Activated CD4-positive, alpha-beta T cell treated with anti-CD3 and anti-CD28 coated beads, Interleukin-2, amount 10 ng/mL, durations not matched to agents 24 days and 14 days (primary cell): ENCODE measurements at regions of chr22 and their contacts with region 1.

Region 1: DNA sequence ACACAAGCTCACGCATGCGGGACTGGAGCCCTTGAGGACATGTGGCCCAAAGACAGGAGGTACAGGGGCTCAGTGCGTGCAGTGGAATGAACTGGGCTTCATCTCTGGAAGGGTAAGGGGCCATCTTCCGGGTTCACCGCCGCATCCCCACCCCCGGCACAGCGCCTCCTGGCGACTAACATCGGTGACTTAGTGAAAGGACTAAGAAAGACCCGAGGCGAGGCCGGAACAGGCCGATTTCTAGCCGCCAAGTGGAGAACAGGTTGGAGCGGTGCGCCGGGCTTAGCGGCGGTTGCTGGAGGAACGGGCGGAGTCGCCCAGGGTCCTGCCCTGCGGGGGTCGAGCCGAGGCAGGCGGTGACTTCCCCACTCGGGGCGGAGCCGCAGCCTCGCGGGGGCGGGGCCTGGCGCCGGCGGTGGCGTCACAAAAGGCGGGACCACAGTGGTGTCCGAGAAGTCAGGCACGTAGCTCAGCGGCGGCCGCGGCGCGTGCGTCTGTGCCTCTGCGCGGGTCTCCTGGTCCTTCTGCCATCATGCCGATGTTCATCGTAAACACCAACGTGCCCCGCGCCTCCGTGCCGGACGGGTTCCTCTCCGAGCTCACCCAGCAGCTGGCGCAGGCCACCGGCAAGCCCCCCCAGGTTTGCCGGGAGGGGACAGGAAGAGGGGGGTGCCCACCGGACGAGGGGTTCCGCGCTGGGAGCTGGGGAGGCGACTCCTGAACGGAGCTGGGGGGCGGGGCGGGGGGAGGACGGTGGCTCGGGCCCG is at the start of gene MIF:
- DNase-seq: peak; percentile 100
- H3K4me3 Mint-ChIP-seq: peak within 1 kb of the TSS; percentile 97
- H3K27ac Mint-ChIP-seq: peak within 1 kb of the TSS; percentile 100
- H3K4me1 Mint-ChIP-seq: peaks cover 22% of the 10 kb centered on the region
- H3K27me3 Mint-ChIP-seq: no peaks in the 10 kb centered on the region
- total RNA-seq, gene MIF: 1,352 and 1,382 TPM in 2 replicates

Region 2: GRCh38 chr22:23608583-23608982 is 285.5 kb before region 1 on chr22:
- intact Hi-C with region 1: no loop called
- DNase-seq: no peak
- H3K4me3 Mint-ChIP-seq: no peak overlapping the region
- H3K27ac Mint-ChIP-seq: no peak overlapping the region
- H3K4me1 Mint-ChIP-seq: peaks cover 15% of the 10 kb centered on the region
- H3K27me3 Mint-ChIP-seq: no peaks in the 10 kb centered on the region

Region 3: DNA sequence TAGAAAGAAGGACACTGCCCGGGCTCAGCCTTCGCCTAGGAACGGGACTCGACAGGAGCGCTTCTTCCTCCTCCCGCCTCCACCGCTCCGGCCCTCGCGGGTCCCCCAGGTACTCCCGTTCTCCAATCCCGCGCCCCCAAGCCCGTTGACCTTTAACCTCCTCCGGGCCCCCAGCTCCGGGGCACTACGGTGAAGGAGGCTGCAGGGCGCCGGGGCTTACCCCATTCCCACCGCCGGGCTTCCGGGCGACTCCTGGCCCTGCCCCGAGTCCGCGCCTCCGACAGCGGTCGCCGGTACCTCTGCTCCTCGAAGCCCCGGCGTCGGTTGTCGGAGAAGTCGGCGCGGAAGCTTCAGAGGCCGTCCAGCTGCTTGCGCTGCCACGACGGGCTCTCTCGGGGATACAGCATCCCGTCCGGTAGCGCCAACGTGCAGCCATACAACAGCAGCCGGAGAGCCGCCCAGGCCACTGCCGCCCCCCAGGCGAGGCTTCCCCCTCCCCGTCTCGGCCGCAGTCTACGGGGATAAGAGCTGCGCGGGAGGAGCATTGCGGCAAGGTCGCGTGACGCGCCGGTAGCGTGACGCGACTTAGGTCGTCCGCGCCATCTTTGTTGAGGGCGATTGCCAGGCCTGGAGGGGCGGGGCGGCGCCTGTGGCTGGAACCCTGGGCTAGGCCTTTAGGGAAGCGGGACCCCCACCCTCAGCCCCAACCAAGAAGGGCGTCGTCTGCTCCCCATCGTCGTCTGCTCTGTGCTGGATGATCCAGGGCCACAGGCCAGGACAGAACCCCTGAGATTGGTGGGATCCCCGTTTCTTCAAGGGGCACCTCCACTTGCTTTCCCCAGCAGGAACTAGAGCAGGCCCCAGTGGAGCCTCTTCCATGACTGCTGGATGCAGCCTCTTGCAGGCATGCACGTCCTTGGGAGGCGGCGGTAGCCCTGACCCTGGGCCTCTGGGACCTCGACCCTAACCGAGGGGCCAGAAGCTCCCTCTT is 177.0 kb before region 1 on chr22:
- intact Hi-C with region 1: loop called (anchors 1 kb)
- DNase-seq: peak; percentile 96
- H3K4me3 Mint-ChIP-seq: peak overlapping the region; percentile 80
- H3K27ac Mint-ChIP-seq: peak overlapping the region; percentile 87
- H3K4me1 Mint-ChIP-seq: peaks cover 14% of the 10 kb centered on the region
- H3K27me3 Mint-ChIP-seq: no peaks in the 10 kb centered on the region

Region 4: GRCh38 chr22:23767673-23768548 is 126.2 kb before region 1 on chr22 and contains the start of gene CHCHD10:
- intact Hi-C with region 1: loop called (anchors 1 kb)
- DNase-seq: peak; percentile 95
- H3K4me3 Mint-ChIP-seq: peak within 1 kb of the TSS; percentile 87
- H3K27ac Mint-ChIP-seq: peak within 1 kb of the TSS; percentile 79
- H3K4me1 Mint-ChIP-seq: peaks cover 34% of the 10 kb centered on the region
- H3K27me3 Mint-ChIP-seq: peaks cover 2% of the 10 kb centered on the region
- total RNA-seq, gene CHCHD10: 122 and 126 TPM in 2 replicates

Region 5: GRCh38 chr22:23786752-23787599 is 107.2 kb before region 1 on chr22 and contains the start of gene SMARCB1:
- intact Hi-C with region 1: loop called (anchors 2 kb)
- DNase-seq: peak; percentile 96
- H3K4me3 Mint-ChIP-seq: peak within 1 kb of the TSS; percentile 88
- H3K27ac Mint-ChIP-seq: peak within 1 kb of the TSS; percentile 95
- H3K4me1 Mint-ChIP-seq: peaks cover 28% of the 10 kb centered on the region
- H3K27me3 Mint-ChIP-seq: no peaks in the 10 kb centered on the region
- total RNA-seq, gene SMARCB1: 89.9 and 92.2 TPM in 2 replicates

Region 6: DNA sequence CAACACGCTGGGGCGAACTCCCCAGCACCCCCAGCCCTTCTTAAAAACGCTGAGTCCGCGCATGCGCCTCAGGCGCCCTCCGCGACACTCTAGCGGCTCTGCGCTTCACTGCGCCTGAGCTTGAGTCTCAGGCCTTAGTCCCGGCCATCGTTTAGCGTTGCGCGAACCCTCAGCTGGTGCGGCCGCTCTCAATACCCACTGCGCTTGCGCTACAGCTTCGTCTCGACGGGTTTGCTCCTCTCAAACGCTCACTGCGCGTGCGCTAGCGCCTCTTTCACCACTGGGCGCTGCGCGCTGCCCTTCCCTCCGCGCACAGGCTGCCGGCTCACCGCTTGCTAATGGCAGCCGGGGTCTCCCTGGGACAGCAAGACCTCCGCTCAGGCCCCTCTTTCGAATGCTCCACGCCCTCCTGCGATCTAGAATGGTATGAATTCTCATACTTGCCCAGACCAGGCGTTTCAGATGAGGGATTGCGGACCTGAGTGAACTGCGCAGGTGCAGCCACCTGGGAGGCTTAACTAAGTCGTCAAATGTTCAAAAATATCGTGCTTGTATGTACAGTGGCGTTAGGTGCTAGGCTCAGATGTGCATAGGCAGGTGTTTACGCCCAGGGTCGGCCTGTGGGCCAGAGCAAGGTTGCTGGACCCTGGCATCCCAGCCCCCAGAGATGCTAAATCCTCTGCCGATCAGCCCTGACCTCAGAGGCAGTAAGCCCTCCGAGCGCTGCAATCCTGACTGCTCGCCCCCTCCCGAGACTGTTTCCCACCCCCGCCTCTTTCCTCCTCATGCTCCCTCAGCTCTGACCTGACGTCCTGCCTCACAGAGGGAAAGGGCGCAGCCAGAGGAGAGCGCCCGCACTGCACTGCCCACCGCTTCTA is 36.3 kb before region 1 on chr22 and contains the start of gene SLC2A11:
- intact Hi-C with region 1: loop called (anchors 5 kb)
- DNase-seq: peak; percentile 98
- H3K4me3 Mint-ChIP-seq: peak within 1 kb of the TSS; percentile 90
- H3K27ac Mint-ChIP-seq: peak within 1 kb of the TSS; percentile 88
- H3K4me1 Mint-ChIP-seq: peaks cover 24% of the 10 kb centered on the region
- H3K27me3 Mint-ChIP-seq: peaks cover 6% of the 10 kb centered on the region
- total RNA-seq, gene SLC2A11: 8.0 and 9.3 TPM in 2 replicates

Region 7: DNA sequence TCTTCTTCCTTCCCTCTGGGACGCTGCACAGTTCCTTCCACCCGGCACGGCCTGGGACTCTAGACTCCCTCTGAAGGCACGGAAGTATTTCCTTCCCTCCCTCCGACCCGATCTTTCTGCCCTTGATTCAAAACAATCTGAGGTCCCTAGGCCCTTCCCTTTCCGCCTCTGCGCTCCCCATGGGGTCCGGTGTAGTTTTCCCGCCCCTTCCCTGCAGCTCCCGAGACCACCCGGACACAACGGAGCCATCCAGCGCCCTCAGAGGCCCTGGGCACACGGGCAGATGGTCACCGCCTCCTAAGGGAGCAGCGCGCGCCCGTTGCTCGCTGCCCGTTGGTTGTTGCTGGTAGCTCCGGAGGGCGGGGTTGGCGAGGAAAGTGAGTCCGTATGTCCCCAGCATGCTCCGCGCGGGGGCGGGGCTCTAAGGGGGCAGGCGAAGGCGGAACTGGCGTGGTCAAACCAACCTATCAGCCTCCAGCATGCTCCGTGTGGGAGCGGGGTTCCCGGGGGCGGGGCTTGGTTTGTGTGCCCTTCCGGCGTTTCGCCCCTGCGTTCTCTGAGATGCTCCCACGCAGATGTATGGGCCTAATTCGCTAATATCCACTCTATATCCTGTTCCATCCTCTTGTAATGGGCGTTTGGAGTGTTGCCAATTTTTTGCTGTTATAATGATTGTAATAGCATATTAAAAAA is 19.7 kb after region 1 on chr22:
- intact Hi-C with region 1: loop called (anchors 1 kb)
- DNase-seq: peak; percentile 100
- H3K4me3 Mint-ChIP-seq: peak overlapping the region; percentile 95
- H3K27ac Mint-ChIP-seq: peak overlapping the region; percentile 99
- H3K4me1 Mint-ChIP-seq: peaks cover 26% of the 10 kb centered on the region
- H3K27me3 Mint-ChIP-seq: no peaks in the 10 kb centered on the region

Region 8: DNA sequence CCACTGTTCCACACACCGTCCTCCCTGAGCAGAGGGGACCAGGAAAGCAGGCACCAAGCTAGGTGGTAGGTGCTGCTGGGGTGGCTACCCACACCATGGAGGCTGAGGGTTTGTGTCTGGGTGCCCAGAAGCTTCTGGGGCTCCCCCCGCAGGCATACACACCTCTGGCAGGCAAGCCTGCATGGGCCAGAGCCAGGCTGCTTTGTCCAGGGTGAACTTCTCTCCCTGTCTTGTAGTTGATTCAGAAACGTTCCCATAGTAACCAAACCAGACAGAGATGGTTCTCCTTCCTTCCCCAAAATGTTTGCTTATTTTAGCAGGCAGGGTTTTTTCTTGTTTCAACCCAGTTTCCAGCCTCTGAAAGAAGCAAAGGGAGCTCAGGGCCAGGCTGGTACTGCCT is 246.2 kb after region 1 on chr22:
- intact Hi-C with region 1: no loop called
- DNase-seq: no peak
- H3K4me3 Mint-ChIP-seq: no peak overlapping the region
- H3K27ac Mint-ChIP-seq: no peak overlapping the region
- H3K4me1 Mint-ChIP-seq: peaks cover 32% of the 10 kb centered on the region
- H3K27me3 Mint-ChIP-seq: no peaks in the 10 kb centered on the region

Region 9: DNA sequence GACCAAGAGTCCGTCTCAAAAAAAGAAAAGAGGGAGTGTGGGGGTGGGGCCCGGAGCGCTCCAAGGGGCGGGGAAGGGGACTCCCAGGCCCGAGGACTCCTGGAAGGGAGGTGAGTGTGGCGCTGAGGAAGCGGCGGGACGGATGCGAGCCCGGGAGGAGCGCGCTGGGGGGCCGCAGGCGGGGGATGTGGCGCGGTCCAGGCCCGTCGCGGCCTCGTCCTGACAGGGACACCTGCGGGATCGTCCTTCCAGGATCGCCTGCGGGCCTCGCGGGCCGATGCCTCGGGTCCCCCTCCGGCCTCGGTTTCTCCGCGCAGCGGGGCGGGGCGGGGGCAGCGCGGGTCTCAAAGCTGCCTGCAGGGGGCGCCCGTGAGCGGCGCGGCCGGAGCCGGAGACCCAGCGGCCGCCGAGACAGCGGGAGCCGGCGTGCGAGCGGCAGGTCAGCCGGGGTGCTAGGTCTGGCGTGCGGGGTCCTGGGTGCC is 529.4 kb after region 1 on chr22:
- intact Hi-C with region 1: no loop called
- DNase-seq: peak; percentile 93
- H3K4me3 Mint-ChIP-seq: peak overlapping the region; percentile 82
- H3K27ac Mint-ChIP-seq: peak overlapping the region; percentile 48
- H3K4me1 Mint-ChIP-seq: peaks cover 33% of the 10 kb centered on the region
- H3K27me3 Mint-ChIP-seq: peaks cover 4% of the 10 kb centered on the region